ENCODE measurements at regions of chr14 and their contacts with region 1.

Region 1: GRCh38 chr14:106013879-106014376 is 487.5 kb downstream of the TMEM121 start:
- DNase-seq: peak; percentile 30
- H3K4me3 Mint-ChIP-seq: peak overlapping the region; percentile 19
- H3K27ac Mint-ChIP-seq: peak overlapping the region; percentile 91
- H3K4me1 Mint-ChIP-seq: peaks cover 70% of the 10 kb centered on the region
- H3K27me3 Mint-ChIP-seq: no peaks in the 10 kb centered on the region

Region 2: DNA sequence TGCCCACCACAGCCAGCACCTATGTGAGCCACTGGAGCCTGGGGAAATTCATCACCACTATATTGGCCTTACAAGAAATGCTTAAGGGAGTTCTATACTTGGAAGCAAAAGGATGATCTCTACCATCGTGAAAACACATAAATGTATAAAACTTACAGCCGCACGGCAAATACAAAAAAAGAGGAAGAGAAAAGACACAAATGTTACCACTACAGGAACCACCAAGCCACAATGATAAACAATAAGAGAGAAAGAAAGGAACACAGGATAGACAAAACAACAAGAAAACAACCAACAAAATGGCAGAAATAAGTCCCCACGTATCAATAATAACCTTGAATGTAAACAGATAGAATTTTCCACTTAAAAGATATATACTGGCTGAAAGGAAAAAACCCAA is 220.1 kb before region 1 on chr14:
- intact Hi-C with region 1: no loop called
- DNase-seq: no peak
- H3K4me3 Mint-ChIP-seq: no peak overlapping the region
- H3K27ac Mint-ChIP-seq: no peak overlapping the region
- H3K4me1 Mint-ChIP-seq: no peaks in the 10 kb centered on the region
- H3K27me3 Mint-ChIP-seq: peaks cover 23% of the 10 kb centered on the region

Region 3: DNA sequence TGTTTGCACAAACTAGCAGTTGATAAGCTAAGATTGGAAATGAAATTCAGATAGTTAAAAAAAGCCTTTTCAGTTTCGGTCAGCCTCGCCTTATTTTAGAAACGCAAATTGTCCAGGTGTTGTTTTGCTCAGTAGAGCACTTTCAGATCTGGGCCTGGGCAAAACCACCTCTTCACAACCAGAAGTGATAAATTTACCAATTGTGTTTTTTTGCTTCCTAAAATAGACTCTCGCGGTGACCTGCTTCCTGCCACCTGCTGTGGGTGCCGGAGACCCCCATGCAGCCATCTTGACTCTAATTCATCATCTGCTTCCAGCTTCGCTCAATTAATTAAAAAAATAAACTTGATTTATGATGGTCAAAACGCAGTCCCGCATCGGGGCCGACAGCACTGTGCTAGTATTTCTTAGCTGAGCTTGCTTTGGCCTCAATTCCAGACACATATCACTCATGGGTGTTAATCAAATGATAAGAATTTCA is 151.9 kb before region 1 on chr14:
- intact Hi-C with region 1: loop called (anchors 5 kb)
- DNase-seq: peak; percentile 24
- H3K4me3 Mint-ChIP-seq: peak overlapping the region; percentile 78
- H3K27ac Mint-ChIP-seq: peak overlapping the region; percentile 80
- H3K4me1 Mint-ChIP-seq: peaks cover 40% of the 10 kb centered on the region
- H3K27me3 Mint-ChIP-seq: peaks cover 4% of the 10 kb centered on the region

Region 4: GRCh38 chr14:106024983-106025604 is 11.2 kb after region 1 on chr14:
- intact Hi-C with region 1: loop called (anchors 1 kb)
- DNase-seq: peak; percentile 57
- H3K4me3 Mint-ChIP-seq: peak overlapping the region; percentile 27
- H3K27ac Mint-ChIP-seq: peak overlapping the region; percentile 81
- H3K4me1 Mint-ChIP-seq: peaks cover 60% of the 10 kb centered on the region
- H3K27me3 Mint-ChIP-seq: peaks cover 1% of the 10 kb centered on the region

Region 5: GRCh38 chr14:106062502-106063272 is 48.8 kb after region 1 on chr14:
- intact Hi-C with region 1: loop called (anchors 5 kb)
- DNase-seq: no peak
- H3K4me3 Mint-ChIP-seq: no peak overlapping the region
- H3K27ac Mint-ChIP-seq: no peak overlapping the region
- H3K4me1 Mint-ChIP-seq: peaks cover 21% of the 10 kb centered on the region
- H3K27me3 Mint-ChIP-seq: peaks cover 28% of the 10 kb centered on the region

Region 6: DNA sequence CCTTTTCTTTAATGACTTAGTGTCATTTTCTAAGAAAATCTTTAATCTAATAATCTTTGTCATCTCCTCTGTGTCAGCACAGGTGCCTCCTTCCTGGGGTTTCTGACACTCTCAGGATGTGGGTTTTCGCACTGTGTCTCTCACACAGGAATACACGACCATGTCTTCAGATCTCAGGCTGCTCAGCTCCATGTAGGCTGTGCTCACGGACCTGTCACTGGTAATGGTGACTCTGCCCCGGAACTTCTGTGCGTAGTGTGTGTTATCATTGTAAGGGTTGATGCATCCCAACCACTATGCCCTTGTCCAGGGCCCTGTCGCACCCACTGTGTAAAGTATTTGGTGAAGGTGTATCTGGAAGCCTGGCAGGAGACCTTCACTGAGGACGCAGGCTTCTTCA is 160.3 kb after region 1 on chr14:
- intact Hi-C with region 1: loop called (anchors 5 kb)
- DNase-seq: peak; percentile 54
- H3K4me3 Mint-ChIP-seq: peak overlapping the region; percentile 2
- H3K27ac Mint-ChIP-seq: peak overlapping the region; percentile 20
- H3K4me1 Mint-ChIP-seq: peaks cover 53% of the 10 kb centered on the region
- H3K27me3 Mint-ChIP-seq: peaks cover 30% of the 10 kb centered on the region

Region 7: GRCh38 chr14:106308839-106309389 is 295.0 kb after region 1 on chr14:
- intact Hi-C with region 1: no loop called
- DNase-seq: peak; percentile 88
- H3K4me3 Mint-ChIP-seq: no peak overlapping the region
- H3K27ac Mint-ChIP-seq: peak overlapping the region; percentile 37
- H3K4me1 Mint-ChIP-seq: no peaks in the 10 kb centered on the region
- H3K27me3 Mint-ChIP-seq: peaks cover 16% of the 10 kb centered on the region

Measured in activated T-helper 1 cell treated with anti-CD3 and anti-CD28 coated beads, Interleukin-12 subunit alpha, Interleukin-12 subunit beta, Interleukin-2, Interleukin-4 antibody, amounts not matched to agents 30 ng/mL and 10 ng/mL and 1 ng/mL, durations not matched to agents 14 hours and 24 hours and 36 hours (primary cell).